ENCODE measurements at regions of chr7 and their contacts with region 1.

Region 1: GRCh38 chr7:83613232-83613631 is 35.7 kb downstream of the SEMA3E start:
- DNase-seq: no peak
- H3K4me3 ChIP-seq: no peak overlapping the region
- H3K27ac ChIP-seq: no peak overlapping the region
- H3K4me1 ChIP-seq: no peaks in the 10 kb centered on the region
- H3K27me3 ChIP-seq: no peaks in the 10 kb centered on the region
- CTCF ChIP-seq: no peak

Region 2: GRCh38 chr7:83439026-83439425 is 174.2 kb before region 1 on chr7:
- CTCF ChIA-PET with region 1: no interaction called
- POLR2A ChIA-PET with region 1: no interaction called
- intact Hi-C with region 1: no loop called
- DNase-seq: no peak
- H3K4me3 ChIP-seq: no peak overlapping the region
- H3K27ac ChIP-seq: no peak overlapping the region
- H3K4me1 ChIP-seq: no peaks in the 10 kb centered on the region
- H3K27me3 ChIP-seq: no peaks in the 10 kb centered on the region
- CTCF ChIP-seq: no peak

Region 3: GRCh38 chr7:83562960-83563359 is 50.3 kb before region 1 on chr7:
- CTCF ChIA-PET with region 1: interaction called, 10 read pairs
- POLR2A ChIA-PET with region 1: no interaction called
- intact Hi-C with region 1: no loop called
- DNase-seq: no peak
- H3K4me3 ChIP-seq: no peak overlapping the region
- H3K27ac ChIP-seq: no peak overlapping the region
- H3K4me1 ChIP-seq: no peaks in the 10 kb centered on the region
- H3K27me3 ChIP-seq: no peaks in the 10 kb centered on the region
- CTCF ChIP-seq: no peak

Region 4: DNA sequence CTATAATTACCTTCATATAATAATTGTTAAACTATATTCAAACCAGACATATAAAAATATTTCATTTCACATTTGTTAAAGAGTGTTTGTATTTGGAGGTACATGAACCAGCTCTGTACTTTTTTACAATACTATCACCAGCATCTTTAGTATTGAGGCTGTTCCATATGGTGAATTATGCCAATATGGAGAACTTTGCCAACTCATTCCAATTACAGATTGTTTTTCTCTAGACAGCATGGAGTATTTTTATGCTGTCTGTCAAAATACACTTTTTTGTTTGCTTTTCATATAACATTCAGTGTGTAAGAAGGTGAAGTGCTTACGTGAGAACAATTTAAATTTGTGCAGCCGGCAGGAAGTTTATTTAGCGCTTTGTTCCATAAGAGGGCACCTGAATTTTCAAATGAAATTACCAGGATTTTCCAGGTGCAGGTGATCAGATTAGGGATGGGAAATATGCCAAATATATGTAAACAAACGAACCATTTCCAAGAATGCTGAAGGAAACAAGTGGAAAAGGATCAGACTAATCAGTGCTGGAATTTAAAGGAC is 19.2 kb before region 1 on chr7:
- CTCF ChIA-PET with region 1: no interaction called
- POLR2A ChIA-PET with region 1: interaction called, 20 read pairs
- intact Hi-C with region 1: no loop called
- DNase-seq: no peak
- H3K4me3 ChIP-seq: no peak overlapping the region
- H3K27ac ChIP-seq: no peak overlapping the region
- H3K4me1 ChIP-seq: no peaks in the 10 kb centered on the region
- H3K27me3 ChIP-seq: no peaks in the 10 kb centered on the region
- CTCF ChIP-seq: no peak